Left ventricle myocardium superior (tissue), 1 donor: ENCODE measurements at regions of chr5 and their contacts with region 1.

Region 1: GRCh38 chr5:55172051-55172899 is 702 bp downstream of the CDC20B start:
- DNase-seq: no peak
- ATAC-seq: peak; percentile 84

Region 2: DNA sequence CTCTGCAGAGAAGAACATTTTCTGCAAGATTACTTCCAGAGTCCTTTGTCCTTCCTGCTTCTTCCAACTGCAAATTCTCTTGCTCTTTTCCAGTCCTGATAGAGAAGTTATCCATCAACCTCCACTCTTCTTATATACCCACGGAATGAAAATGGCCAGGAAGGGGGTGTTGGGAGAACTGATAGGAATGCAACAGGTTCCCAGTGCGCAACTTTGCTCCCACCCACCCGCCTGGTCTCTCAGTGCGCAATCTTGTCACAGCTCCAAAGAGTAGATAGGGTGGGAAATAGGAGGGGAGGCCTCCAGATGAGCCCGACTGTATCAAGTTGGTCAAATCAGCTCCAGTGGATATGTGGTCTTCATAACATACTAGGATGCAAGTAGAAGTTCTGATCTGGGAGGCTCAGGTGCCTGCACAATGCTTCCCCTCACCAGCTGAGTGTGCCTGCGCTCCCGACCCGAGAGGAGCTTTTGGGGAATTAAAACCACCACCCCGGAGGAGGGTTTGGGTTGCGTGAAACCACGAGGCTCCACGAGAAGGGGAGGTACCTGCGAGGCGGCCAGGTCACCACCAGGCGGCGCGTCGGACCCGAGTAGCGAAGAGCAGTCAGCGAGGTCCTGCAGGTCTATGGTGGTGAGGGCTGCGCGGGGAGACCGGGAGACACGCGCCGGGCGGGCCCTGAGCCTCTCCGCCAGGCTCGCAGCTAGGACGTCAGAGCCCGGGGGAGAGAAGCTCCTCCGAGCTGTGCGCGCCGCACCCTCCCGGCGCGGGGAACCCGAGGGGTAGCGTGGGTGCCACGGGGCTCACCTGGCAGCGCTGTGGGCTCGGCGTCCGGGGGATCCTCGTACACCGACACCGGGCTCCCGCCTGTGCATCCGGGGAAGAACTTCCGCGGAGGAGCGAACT is 54.0 kb after region 1 on chr5:
- intact Hi-C with region 1: loop called (anchors 10 kb)
- DNase-seq: no peak
- ATAC-seq: peak; percentile 66

Region 3: GRCh38 chr5:55439008-55439407 is 266.7 kb after region 1 on chr5:
- intact Hi-C with region 1: no loop called
- DNase-seq: no peak
- ATAC-seq: peak; percentile 36